Dorsolateral prefrontal cortex (tissue), 120 donors: ENCODE measurements at regions of chr16 and their contacts with region 1.

Region 1: DNA sequence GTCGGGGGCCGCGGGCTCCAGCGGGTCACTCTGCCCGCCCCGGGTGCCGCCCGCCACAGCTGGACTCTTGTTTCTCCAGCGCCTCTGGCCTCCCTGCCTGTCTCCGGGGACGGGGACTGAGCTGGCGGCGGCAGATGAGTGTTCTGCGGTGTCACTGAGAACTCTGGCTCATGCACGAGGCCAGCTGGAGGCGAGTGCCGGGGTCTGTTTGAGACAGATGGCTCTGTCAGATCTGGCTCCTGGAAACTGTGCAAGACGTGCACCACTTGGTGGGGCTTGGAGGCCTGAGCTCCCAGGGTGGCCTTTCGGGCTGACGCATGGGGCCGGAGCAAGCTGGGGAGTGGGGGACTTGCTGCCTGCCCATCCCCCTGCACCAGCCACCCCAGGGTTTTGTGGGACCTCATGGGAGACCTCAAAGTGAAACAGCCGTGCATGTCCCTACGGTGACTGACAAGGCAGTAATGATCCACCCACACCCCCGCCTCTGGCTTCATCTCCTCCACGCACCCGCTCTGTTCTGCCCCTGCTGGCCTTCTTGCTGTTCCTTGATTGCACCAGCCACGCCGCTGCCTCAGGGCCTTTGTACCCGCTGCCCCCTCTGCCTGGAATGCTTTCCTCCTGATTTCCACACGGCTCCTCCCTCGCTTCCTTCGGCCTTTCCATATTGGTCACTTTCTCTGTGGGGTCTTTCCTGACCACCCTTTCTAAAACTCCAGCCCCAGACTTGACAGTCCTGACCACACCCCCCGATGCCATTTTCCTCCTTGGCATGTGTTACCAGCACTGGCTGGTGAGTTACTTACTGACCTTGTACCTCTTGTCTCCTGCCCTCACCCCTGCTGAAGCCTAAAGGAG is 174.9 kb upstream of the CIBAR2 start:
- DNase-seq: peak; percentile 68 to 91 (median 84)
- H3K4me3 ChIP-seq: peak overlapping the region in 47 of 59 donors; percentile 0 to 60 (median 26)
- H3K27ac ChIP-seq: peak overlapping the region; percentile 71 to 97 (median 93)
- H3K27me3 ChIP-seq: no peaks in the 10 kb centered on the region
- CTCF ChIP-seq: peak in 11 of 56 donors; percentile 4 to 42 (median 12)

Region 2: GRCh38 chr16:85309656-85310587 is 22.7 kb after region 1 on chr16:
- intact Hi-C with region 1: loop called (anchors 1 to 2 kb)
- DNase-seq: peak; percentile 51 to 93 (median 87)
- H3K4me3 ChIP-seq: peak overlapping the region in 18 of 59 donors; percentile 5 to 40 (median 20)
- H3K27ac ChIP-seq: peak overlapping the region; percentile 82 to 99 (median 94)
- H3K27me3 ChIP-seq: no peaks in the 10 kb centered on the region
- CTCF ChIP-seq: peak in 26 of 56 donors; percentile 5 to 57 (median 28)